Activated T-helper 1 cell treated with anti-CD3 and anti-CD28 coated beads, Interleukin-12 subunit alpha, Interleukin-12 subunit beta, Interleukin-2, Interleukin-4 antibody, amounts not matched to agents 30 ng/mL and 10 ng/mL and 1 ng/mL, durations not matched to agents 14 hours and 24 hours and 36 hours (primary cell): ENCODE measurements at regions of chr4 and their contacts with region 1.

Region 1: DNA sequence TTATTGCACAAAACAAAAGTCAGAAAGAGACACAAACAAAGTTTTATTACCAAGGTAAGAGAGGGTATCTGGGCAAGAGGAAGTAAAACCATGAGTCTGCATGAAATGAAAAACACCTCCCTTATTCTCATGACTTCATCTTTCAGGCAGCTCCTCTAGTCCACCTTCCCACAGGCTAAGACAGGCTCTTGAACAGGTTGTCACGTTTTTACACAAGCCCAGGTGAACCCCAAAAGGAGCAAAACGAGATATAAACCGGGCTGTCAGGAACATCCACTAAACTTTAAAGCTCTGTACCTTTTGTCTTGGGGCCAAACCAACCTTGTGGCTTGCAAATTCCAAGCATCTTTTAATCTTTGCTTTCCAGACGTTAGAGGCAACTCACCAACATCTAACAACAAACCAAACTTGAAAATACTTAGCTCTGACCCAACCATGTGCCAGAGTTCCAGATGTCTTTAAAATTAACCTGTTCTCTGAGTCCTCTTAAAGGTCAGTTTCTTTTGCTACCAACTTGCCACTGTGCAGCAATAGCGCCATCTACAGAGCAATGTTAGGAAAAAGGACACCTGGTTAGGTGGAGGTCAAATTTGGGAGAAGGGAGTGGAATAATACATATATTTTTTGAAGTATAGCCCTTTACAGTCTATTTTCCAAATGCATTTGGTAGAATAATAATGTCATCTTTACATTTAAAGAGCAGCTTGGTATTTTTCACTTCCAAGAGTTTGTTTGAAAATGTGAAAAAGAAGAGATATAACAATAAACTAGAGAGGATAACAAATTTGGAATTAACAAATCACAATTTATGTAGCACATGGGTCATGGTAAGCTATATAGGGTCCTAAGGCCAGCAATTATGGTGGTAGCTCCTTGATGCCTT is 73.1 kb downstream of the QRFPR start:
- DNase-seq: peak; percentile 27
- H3K4me3 Mint-ChIP-seq: no peak overlapping the region
- H3K27ac Mint-ChIP-seq: peak overlapping the region; percentile 25
- H3K4me1 Mint-ChIP-seq: peaks cover 16% of the 10 kb centered on the region
- H3K27me3 Mint-ChIP-seq: peaks cover 14% of the 10 kb centered on the region

Region 2: GRCh38 chr4:120066517-120067340 is 1241.0 kb before region 1 on chr4 and contains the start of gene MAD2L1:
- intact Hi-C with region 1: loop called (anchors 1 kb)
- DNase-seq: peak; percentile 98
- H3K4me3 Mint-ChIP-seq: peak within 1 kb of the TSS; percentile 99
- H3K27ac Mint-ChIP-seq: peak within 1 kb of the TSS; percentile 100
- H3K4me1 Mint-ChIP-seq: peaks cover 83% of the 10 kb centered on the region
- H3K27me3 Mint-ChIP-seq: peaks cover 4% of the 10 kb centered on the region
- total RNA-seq, gene MAD2L1: 63.3 and 69.0 TPM in 2 replicates

Region 3: GRCh38 chr4:120718979-120719566 is 588.6 kb before region 1 on chr4:
- intact Hi-C with region 1: loop called (anchors 1 kb)
- DNase-seq: no peak
- H3K4me3 Mint-ChIP-seq: no peak overlapping the region
- H3K27ac Mint-ChIP-seq: no peak overlapping the region
- H3K4me1 Mint-ChIP-seq: no peaks in the 10 kb centered on the region
- H3K27me3 Mint-ChIP-seq: peaks cover 16% of the 10 kb centered on the region

Region 4: GRCh38 chr4:121096629-121097028 is 211.1 kb before region 1 on chr4:
- intact Hi-C with region 1: loop called (anchors 1 kb)
- DNase-seq: no peak
- H3K4me3 Mint-ChIP-seq: no peak overlapping the region
- H3K27ac Mint-ChIP-seq: no peak overlapping the region
- H3K4me1 Mint-ChIP-seq: no peaks in the 10 kb centered on the region
- H3K27me3 Mint-ChIP-seq: peaks cover 21% of the 10 kb centered on the region

Region 5: GRCh38 chr4:121252224-121252806 is 55.4 kb before region 1 on chr4:
- intact Hi-C with region 1: loop called (anchors 1 kb)
- DNase-seq: peak; percentile 21
- H3K4me3 Mint-ChIP-seq: no peak overlapping the region
- H3K27ac Mint-ChIP-seq: no peak overlapping the region
- H3K4me1 Mint-ChIP-seq: peaks cover 66% of the 10 kb centered on the region
- H3K27me3 Mint-ChIP-seq: peaks cover 6% of the 10 kb centered on the region